ENCODE measurements at regions of chr15 and their contacts with region 1.

Region 1: GRCh38 chr15:81118361-81118760 is 15.7 kb upstream of the CFAP161 start:
- DNase-seq: no peak
- ATAC-seq: peak; percentile 84
- H3K4me3 ChIP-seq: peak overlapping the region; percentile 26 to 47
- H3K27ac ChIP-seq: no peak overlapping the region
- H3K4me1 ChIP-seq: peaks cover 7 to 9% of the 10 kb centered on the region in 2 experiments
- H3K27me3 ChIP-seq: no peaks in the 10 kb centered on the region
- CTCF ChIP-seq: no peak
- POLR2A ChIP-seq: no peak
- RAD21 ChIP-seq: no peak

Region 2: DNA sequence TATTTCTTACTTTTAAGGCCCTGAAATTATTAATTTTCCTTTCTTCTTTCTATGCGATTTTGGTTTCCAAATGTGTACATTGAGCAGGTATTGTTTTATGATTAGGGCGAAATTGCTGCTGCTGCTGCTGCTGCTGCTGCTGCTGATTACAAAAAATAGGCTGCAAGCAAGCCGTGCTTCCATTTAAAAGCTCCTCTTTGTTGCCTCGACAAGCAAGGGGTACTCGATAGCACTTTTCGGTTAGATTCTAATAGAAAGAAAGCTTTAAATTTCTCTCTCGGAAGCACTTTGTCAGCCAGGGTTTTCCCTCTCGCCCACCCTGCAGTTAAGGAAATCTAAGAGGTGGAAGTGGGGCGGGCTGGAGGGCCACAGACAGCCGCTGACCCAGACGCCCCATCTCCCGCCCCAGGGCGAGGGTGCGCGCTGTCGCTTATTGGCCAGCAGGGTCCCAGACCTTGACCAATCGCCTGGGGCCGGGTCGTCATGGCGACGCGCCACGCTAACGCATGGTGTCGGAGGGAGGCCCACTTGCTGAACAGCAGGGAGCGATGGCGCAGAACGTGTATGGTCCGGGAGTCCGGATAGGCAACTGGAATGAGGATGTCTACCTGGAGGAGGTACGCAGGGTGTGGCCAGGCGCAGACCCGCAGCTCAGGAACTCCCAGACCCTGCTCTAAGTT is 15.6 kb after region 1 on chr15 and contains the start of gene CFAP161:
- CTCF ChIA-PET with region 1: no interaction called
- POLR2A ChIA-PET with region 1: interaction called, 3 read pairs
- RAD21 ChIA-PET with region 1: no interaction called
- intact Hi-C with region 1: loop called (anchors 2 kb)
- DNase-seq: peak; percentile 42
- ATAC-seq: peak; percentile 99
- H3K4me3 ChIP-seq: peak within 1 kb of the TSS; percentile 31 to 49
- H3K27ac ChIP-seq: no peak within 1 kb of the TSS
- H3K4me1 ChIP-seq: peaks cover 0 to 7% of the 10 kb centered on the region in 2 experiments; a peak in 1 of 4 replicates
- H3K27me3 ChIP-seq: peaks cover 10% of the 10 kb centered on the region; the same call in 1 of the 2 replicates
- CTCF ChIP-seq: no peak
- POLR2A ChIP-seq: no peak
- RAD21 ChIP-seq: no peak
- total RNA-seq, gene CFAP161: 0.15 TPM